ENCODE measurements at regions of chr7 and their contacts with region 1.

Region 1: GRCh38 chr7:151687523-151688218 is 168.0 kb upstream of the RHEB start:
- DNase-seq: peak; percentile 96
- ATAC-seq: peak; percentile 93
- H3K4me3 ChIP-seq: no peak overlapping the region
- H3K27ac ChIP-seq: peak overlapping the region; percentile 86
- H3K4me1 ChIP-seq: peaks cover 38% of the 10 kb centered on the region
- H3K27me3 ChIP-seq: no peaks in the 10 kb centered on the region
- CTCF ChIP-seq: no peak
- POLR2A ChIP-seq: no peak
- RAD21 ChIP-seq: peak; percentile 13; the same call in 1 of the 2 replicates

Region 2: GRCh38 chr7:151361193-151361959 is 326.3 kb before region 1 on chr7:
- CTCF ChIA-PET with region 1: no interaction called
- POLR2A ChIA-PET with region 1: no interaction called
- dilution Hi-C with region 1: no loop called
- in situ Hi-C with region 1: no loop called
- intact Hi-C with region 1: no loop called
- DNase-seq: peak; percentile 49
- ATAC-seq: peak; percentile 69
- H3K4me3 ChIP-seq: no peak overlapping the region
- H3K27ac ChIP-seq: peak overlapping the region; percentile 38; the same call in 1 of the 2 replicates
- H3K4me1 ChIP-seq: peaks cover 12% of the 10 kb centered on the region
- H3K27me3 ChIP-seq: no peaks in the 10 kb centered on the region
- CTCF ChIP-seq: no peak
- POLR2A ChIP-seq: no peak
- RAD21 ChIP-seq: no peak

Region 3: GRCh38 chr7:151665368-151665767 is 22.3 kb before region 1 on chr7:
- CTCF ChIA-PET with region 1: interaction called, 3 read pairs
- POLR2A ChIA-PET with region 1: no interaction called
- dilution Hi-C with region 1: no loop called
- in situ Hi-C with region 1: no loop called
- intact Hi-C with region 1: loop called (anchors 2 kb)
- DNase-seq: peak; percentile 96
- ATAC-seq: peak; percentile 83
- H3K4me3 ChIP-seq: no peak overlapping the region
- H3K27ac ChIP-seq: peak overlapping the region; percentile 76; the same call in 1 of the 2 replicates
- H3K4me1 ChIP-seq: peaks cover 13% of the 10 kb centered on the region
- H3K27me3 ChIP-seq: no peaks in the 10 kb centered on the region
- CTCF ChIP-seq: no peak
- POLR2A ChIP-seq: no peak
- RAD21 ChIP-seq: no peak

Region 4: GRCh38 chr7:151736403-151736909 is 48.8 kb after region 1 on chr7:
- CTCF ChIA-PET with region 1: no interaction called
- POLR2A ChIA-PET with region 1: no interaction called
- dilution Hi-C with region 1: no loop called
- in situ Hi-C with region 1: no loop called
- intact Hi-C with region 1: loop called (anchors 1 kb)
- DNase-seq: peak; percentile 96
- ATAC-seq: peak; percentile 89
- H3K4me3 ChIP-seq: peak overlapping the region; percentile 22; the same call in 1 of the 2 replicates
- H3K27ac ChIP-seq: peak overlapping the region; percentile 82
- H3K4me1 ChIP-seq: peaks cover 21% of the 10 kb centered on the region
- H3K27me3 ChIP-seq: no peaks in the 10 kb centered on the region
- CTCF ChIP-seq: peak; percentile 47
- POLR2A ChIP-seq: no peak
- RAD21 ChIP-seq: peak; percentile 46; the same call in 1 of the 2 replicates

Measured in IMR-90 (cell line).